Aorta (tissue), 5 donors: ENCODE measurements at regions of chr17 and their contacts with region 1.

Region 1: DNA sequence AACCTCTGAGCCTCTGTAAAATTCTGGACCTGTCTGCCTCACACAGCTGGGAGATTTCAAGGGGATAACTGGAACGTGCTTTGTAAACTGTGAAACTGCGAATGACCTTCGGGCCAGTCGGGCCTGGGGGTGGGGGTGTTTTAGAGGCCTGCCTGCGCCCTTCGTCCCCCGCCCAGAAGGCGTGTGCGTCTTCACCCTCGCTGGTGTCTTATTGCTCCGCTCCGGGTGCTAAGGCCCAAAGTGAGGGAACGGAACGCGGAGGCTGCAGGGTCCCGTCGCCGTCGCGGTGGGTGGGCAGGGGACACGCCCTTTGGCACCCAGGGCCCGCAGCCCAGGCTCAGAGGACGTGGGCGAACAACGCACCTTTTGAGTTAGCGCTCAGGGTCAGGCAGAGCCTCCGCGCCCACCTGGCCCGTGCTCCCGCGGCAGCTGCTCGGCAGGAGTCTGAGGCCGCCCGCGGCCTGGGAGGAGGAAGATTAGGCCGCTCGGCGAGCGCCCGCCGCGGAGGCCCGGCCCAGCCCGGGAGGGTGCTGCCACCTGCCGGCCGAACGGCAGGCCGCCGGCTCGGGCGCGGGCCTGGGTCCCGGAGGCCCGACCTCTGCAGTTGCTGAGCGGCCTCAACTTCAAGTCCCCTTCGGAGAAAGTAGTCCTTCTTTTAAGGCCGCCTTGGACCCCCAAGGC is 29.7 kb downstream of the DCAKD start:
- DNase-seq: peak; percentile 79 to 92
- ATAC-seq: peak; percentile 91
- H3K4me3 ChIP-seq: no peak overlapping the region
- H3K27ac ChIP-seq: no peak overlapping the region
- H3K4me1 ChIP-seq: no peaks in the 10 kb centered on the region
- H3K27me3 ChIP-seq: no peaks in the 10 kb centered on the region

Region 2: DNA sequence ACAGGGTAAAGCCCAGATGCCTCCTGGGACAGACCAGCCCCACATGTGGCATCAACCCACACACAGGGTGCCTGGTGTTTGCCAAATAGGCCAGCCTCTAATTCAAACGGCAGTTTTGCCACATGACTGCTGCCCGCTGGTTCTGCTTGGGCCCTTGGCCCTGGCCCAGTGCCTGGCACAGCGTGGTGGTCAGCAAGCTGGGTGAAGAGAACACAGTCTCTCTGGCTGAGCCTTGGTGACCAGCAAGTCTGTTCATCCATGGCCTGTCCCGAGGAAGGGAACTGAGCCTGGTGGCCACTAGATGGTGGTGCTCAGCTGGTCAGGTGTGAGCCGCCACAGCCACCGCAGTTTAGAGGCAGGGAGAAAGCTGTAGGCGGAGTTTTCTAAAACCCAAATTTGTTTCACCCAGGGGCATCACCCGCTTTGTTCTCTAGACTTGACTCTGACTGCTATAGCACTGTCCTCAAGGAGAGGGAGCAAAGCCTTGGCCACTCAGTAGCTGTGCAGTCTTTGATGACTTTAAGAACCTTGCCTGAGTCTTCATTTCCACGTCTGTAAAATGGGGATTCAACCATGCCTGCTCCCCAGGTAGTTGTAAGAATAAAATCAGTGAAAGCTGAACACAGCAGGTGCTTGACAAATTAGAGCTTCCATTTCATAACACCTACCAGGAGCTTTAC is 101.7 kb before region 1 on chr17:
- intact Hi-C with region 1: loop called (anchors 1 kb)
- DNase-seq: peak; percentile 87 to 92
- ATAC-seq: peak; percentile 87
- H3K4me3 ChIP-seq: no peak overlapping the region
- H3K27ac ChIP-seq: no peak overlapping the region
- H3K4me1 ChIP-seq: no peaks in the 10 kb centered on the region
- H3K27me3 ChIP-seq: no peaks in the 10 kb centered on the region

Region 3: GRCh38 chr17:44968226-44969143 is 53.3 kb before region 1 on chr17 and contains the start of gene C1QL1:
- intact Hi-C with region 1: loop called in 1 of 2 experiments (anchors 5 kb)
- DNase-seq: peak; percentile 93 to 97
- ATAC-seq: peak; percentile 97
- H3K4me3 ChIP-seq: peak within 1 kb of the TSS in 1 of 2 donors; percentile 19
- H3K27ac ChIP-seq: no peak within 1 kb of the TSS
- H3K4me1 ChIP-seq: no peaks in the 10 kb centered on the region
- H3K27me3 ChIP-seq: no peaks in the 10 kb centered on the region
- total RNA-seq, gene C1QL1: 1.3 TPM in 1 of 2 donors, not detected in the other

Region 4: GRCh38 chr17:44988044-44988942 is 33.5 kb before region 1 on chr17:
- intact Hi-C with region 1: no loop called
- DNase-seq: no peak
- ATAC-seq: no peak
- H3K4me3 ChIP-seq: no peak overlapping the region
- H3K27ac ChIP-seq: no peak overlapping the region
- H3K4me1 ChIP-seq: no peaks in the 10 kb centered on the region
- H3K27me3 ChIP-seq: no peaks in the 10 kb centered on the region

Region 5: DNA sequence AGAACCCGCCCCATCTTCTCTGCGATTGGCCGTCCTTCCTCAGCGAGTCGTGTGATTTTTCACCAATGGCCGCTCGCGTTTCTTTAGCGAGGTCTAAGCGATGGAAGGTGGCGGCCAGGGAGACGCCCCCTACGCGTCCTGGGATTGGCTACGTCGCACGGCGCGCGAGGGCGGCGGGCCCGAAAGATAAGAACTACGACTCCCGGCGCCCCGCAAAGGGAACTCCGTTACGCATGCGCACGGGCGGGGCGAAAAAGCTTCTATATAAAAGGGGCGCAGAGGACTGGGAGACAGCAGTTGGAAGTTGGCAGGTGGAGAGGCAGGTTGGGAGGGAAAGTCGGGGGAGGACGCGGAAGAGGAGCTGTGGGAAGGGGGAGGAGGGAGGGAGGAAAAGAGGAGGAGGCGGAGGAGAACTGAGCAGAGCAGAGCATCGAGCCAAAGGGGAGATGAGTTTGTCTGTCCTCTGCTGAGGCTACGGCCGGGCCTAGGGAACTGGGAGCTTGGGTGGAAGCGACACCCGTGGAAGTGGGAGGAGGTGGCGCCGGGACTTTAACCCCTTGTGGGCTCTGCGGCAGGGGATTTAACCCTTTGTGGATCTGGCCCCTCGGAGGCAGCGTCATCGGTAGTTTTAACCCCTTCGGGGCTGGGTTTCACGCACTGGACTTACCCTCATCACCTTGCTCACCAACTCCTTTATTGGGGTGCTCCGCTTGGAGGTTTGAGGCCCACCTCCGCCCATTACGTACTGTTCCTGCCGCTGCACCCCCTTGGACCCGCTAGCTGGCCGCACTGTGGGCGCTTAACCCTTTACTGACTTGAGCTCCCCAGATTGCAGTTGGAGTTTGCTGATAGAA is 126.7 kb after region 1 on chr17 and contains the start of gene HEXIM1:
- intact Hi-C with region 1: no loop called
- DNase-seq: peak; percentile 99 to 100
- ATAC-seq: peak; percentile 90
- H3K4me3 ChIP-seq: peak within 1 kb of the TSS; percentile 60 to 83
- H3K27ac ChIP-seq: peak within 1 kb of the TSS; percentile 85 to 94
- H3K4me1 ChIP-seq: peaks cover 0 to 2% of the 10 kb centered on the region in 2 donors
- H3K27me3 ChIP-seq: peaks cover 0 to 2% of the 10 kb centered on the region in 2 donors
- total RNA-seq, gene HEXIM1: 48.7 to 64.0 TPM

Region 6: GRCh38 chr17:45247429-45248131 is 225.8 kb after region 1 on chr17:
- intact Hi-C with region 1: no loop called
- DNase-seq: peak; percentile 89 to 91
- ATAC-seq: peak; percentile 74
- H3K4me3 ChIP-seq: peak overlapping the region; percentile 11 to 23
- H3K27ac ChIP-seq: no peak overlapping the region
- H3K4me1 ChIP-seq: no peaks in the 10 kb centered on the region
- H3K27me3 ChIP-seq: no peaks in the 10 kb centered on the region